ENCODE measurements at regions of chr10 and their contacts with region 1.

Region 1: DNA sequence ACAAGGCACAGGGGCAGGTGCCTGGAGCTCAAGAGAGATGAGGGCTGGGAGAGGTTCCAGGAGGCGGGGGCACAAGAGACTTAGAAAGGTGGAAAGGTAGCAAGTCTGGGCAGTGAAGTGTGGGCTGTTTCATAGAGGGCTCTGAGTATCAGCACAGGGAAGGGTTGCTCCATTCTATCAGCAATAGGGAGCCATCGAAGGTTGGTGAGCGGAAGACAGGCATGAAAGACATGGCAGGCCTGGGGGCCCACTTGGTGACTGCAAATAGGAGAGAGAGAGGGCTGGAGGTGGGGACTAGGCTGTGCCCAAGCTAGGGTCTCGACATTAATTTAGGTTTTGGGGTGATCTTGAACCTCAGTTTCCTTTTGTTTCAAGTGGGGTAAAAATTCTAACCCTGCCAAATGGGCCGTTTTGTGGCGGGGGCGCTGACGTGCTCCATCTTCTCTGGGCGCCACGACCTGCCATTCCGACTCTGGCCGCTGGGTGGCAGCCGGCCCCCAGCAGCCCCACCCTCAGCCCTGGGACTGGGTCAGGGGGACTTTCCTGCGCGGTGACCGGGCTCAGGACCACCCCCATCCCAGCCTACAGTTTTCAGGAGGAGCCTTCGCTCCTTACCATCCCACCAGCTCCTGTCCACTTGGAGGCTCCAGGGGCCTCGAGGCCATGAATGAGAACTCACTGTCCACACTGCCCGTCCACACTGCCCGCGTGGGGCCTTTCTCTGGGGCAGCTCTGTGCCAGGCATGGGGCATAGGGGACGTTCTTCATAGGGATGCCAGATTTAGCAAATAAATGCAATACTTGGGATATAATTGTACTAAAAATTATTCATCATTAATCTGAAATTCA is 37.2 kb upstream of the PCBD1 start:
- DNase-seq: peak in 1 of 2 experiments; percentile 49
- ATAC-seq: peak; percentile 76 to 92
- H3K4me3 ChIP-seq: no peak overlapping the region
- H3K27ac ChIP-seq: no peak overlapping the region
- H3K4me1 ChIP-seq: no peaks in the 10 kb centered on the region
- CTCF ChIP-seq: peak; percentile 90
- EP300 ChIP-seq: no peak
- POLR2A ChIP-seq: no peak
- RAD21 ChIP-seq: peak; percentile 82 to 91

Region 2: GRCh38 chr10:70913191-70913892 is 12.3 kb before region 1 on chr10:
- CTCF ChIA-PET with region 1: interaction called, 104 read pairs
- POLR2A ChIA-PET with region 1: no interaction called
- DNase-seq: no peak
- ATAC-seq: no peak
- H3K4me3 ChIP-seq: no peak overlapping the region
- H3K27ac ChIP-seq: no peak overlapping the region
- H3K4me1 ChIP-seq: no peaks in the 10 kb centered on the region
- CTCF ChIP-seq: no peak
- EP300 ChIP-seq: no peak
- POLR2A ChIP-seq: no peak
- RAD21 ChIP-seq: no peak

Region 3: GRCh38 chr10:70985824-70986622 is 60.4 kb after region 1 on chr10:
- CTCF ChIA-PET with region 1: interaction called, 12 read pairs
- POLR2A ChIA-PET with region 1: no interaction called
- DNase-seq: no peak
- ATAC-seq: no peak
- H3K4me3 ChIP-seq: no peak overlapping the region
- H3K27ac ChIP-seq: no peak overlapping the region
- H3K4me1 ChIP-seq: no peaks in the 10 kb centered on the region
- CTCF ChIP-seq: no peak
- EP300 ChIP-seq: no peak
- POLR2A ChIP-seq: no peak
- RAD21 ChIP-seq: no peak

Region 4: DNA sequence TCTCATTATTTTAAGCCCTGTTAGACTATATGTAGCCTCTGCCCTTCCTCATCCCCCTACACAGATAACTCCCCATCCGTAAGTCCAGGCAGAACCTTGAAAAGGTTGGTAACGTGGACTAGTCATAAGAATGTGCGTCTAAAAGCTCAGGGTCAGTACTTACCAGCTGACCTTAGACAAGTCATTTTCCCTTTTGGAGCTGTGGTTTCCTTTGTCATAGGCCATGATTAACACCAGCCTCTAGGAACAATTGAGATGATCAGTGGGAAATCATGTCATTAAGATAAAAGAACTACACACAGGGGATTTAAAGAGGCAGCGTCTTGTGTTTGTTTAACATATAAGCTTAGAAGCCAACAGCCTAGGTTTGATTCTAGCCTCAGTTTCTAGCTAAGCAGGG is 279.9 kb after region 1 on chr10:
- CTCF ChIA-PET with region 1: interaction called, 88 read pairs
- POLR2A ChIA-PET with region 1: no interaction called
- DNase-seq: no peak
- ATAC-seq: no peak
- H3K4me3 ChIP-seq: no peak overlapping the region
- H3K27ac ChIP-seq: no peak overlapping the region
- H3K4me1 ChIP-seq: no peaks in the 10 kb centered on the region
- CTCF ChIP-seq: no peak
- EP300 ChIP-seq: no peak
- POLR2A ChIP-seq: no peak
- RAD21 ChIP-seq: no peak

Region 5: DNA sequence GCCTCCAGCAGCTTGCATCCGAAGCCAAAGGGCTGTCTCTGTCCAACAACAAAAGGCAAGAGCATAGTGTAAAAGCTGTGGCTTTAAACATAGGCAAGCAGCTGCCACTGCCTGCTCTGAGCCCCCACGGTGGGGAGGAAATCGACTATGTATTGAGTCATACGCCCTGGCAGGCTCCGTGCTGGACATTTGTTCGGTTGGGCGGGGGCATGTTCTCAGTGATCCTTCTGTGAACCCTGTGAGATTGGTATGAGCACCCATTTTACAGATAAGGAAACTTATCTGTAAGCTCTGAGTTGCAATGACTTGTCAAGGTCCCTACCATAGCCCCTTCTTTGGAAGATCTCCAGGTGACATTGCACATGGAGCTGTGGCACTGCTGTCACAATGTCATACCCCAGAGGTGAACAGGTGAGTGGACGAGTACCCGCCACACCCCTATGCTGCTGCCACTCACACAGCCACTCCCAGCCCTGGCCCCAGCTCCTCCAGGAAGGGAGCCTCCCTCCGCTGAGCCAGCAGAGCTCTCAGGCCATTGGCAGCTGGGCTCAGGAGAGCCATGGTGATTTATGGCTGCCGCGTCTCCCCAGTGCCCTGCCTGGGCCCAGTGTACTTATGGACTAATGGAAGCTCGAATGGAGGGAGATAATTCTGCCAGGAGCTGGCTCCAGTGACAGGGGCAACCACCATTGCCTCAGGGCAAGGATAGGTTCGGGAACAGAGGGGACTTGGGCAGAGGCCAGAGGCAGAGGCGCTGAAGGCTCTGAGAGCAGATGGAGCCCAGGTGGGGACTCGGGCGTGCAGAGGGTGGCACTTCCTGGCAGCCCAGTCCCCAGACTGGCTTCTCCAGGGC is 330.4 kb after region 1 on chr10:
- CTCF ChIA-PET with region 1: interaction called, 10 read pairs
- POLR2A ChIA-PET with region 1: no interaction called
- DNase-seq: no peak
- ATAC-seq: no peak; a peak in 1 of 6 replicates
- H3K4me3 ChIP-seq: no peak overlapping the region
- H3K27ac ChIP-seq: no peak overlapping the region
- H3K4me1 ChIP-seq: no peaks in the 10 kb centered on the region
- CTCF ChIP-seq: no peak
- EP300 ChIP-seq: no peak
- POLR2A ChIP-seq: no peak
- RAD21 ChIP-seq: no peak